ENCODE measurements at regions of chr7 and their contacts with region 1.

Region 1: DNA sequence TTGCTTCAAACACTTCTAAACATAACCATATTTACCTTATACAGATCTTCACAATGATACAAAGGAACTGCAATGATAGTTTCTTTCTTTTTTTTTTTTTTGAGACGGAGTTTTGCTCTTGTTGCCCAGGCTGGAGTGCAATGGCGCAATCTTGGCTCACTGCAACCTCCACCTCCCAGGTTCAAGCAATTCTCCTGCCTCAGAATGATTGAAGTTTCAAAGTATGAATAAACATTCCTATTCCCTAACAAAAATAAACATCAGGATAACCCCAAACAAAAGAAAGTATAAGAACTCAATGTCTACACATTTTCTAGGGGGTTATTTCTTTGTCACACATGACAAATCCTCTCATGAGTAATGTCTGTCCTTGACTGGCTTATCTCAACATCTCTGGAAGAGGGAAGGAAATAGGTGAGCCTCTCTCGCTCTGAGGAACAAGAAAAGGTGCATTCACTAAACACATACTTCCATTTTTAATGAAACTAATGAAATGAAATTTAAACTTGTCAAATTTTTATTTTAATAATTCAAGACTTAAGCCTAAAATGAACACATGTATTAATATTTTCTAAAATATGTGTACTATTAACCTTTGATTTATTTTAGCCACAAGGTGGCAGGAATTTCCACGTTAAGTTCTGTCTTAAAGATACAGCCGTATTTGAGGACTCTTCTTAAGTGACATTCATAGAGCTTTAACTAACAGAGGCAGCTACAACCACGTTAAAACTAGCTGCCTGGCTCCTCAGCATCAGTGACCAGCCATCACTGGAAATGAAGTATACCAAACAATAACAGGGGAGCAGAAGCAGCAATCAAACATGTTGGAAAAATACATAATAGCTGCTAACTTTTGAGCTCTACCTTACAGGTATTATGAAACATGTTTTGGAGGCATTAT is 58.3 kb downstream of the MALSU1 start:
- DNase-seq: no peak
- ATAC-seq: peak; percentile 68
- H3K4me3 ChIP-seq: no peak overlapping the region
- H3K27ac ChIP-seq: no peak overlapping the region; the same call in 1 of the 2 replicates
- H3K4me1 ChIP-seq: peaks cover 30% of the 10 kb centered on the region
- H3K27me3 ChIP-seq: no peaks in the 10 kb centered on the region
- CTCF ChIP-seq: peak; percentile 23 to 62 (median 36); a peak in 2 of 6 replicates
- EP300 ChIP-seq: no peak
- POLR2A ChIP-seq: no peak
- RAD21 ChIP-seq: peak; percentile 72

Region 2: DNA sequence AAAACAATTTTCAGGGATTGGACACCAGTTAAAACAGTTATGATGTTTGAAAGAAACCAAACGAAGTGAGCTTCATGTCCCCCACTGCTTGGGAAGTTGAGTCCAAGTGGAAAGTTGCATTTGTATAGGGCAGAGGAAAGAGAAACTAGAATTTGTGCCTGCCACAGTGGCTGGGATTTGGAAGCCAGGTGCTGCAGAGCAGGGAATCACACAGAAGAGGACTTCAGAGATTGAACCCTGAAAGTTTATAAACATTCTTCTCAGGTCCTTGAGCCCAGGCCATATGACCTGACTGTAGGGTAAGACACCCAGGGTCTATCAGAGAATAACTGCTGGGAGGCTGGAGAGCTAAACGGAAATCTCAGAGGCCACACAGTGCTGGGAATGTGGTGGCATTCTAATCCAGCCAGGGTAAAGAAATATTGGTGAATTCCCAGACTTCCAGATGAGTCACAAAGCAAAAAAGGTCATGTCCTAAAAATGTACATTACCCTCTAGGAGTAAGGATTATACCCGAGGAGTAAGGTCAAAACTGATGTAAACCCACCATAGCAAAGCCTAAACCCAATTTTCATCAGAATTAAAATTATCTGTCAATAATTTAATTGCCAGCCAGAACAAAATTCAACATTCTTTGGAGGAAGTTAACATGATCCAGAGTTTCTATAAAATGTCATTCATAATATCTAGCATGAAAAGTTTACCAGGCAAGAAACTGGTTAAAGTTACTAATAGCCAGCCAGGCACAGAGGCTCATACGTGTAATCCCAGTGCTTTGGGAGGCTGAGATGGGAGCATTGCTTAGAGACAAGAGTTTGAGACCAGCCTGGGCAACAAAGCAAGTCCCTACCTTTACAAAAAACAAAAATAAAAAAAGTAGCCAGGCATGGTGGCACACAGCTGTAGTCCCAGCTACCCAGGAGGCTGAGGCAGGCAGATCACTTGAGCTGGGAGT is 566.0 kb before region 1 on chr7:
- CTCF ChIA-PET with region 1: no interaction called
- POLR2A ChIA-PET with region 1: no interaction called
- RAD21 ChIA-PET with region 1: no interaction called
- SMC1A ChIA-PET with region 1: no interaction called
- in situ Hi-C with region 1: no loop called
- intact Hi-C with region 1: no loop called
- DNase-seq: no peak
- ATAC-seq: no peak
- H3K4me3 ChIP-seq: no peak overlapping the region
- H3K27ac ChIP-seq: no peak overlapping the region
- H3K4me1 ChIP-seq: no peaks in the 10 kb centered on the region
- H3K27me3 ChIP-seq: no peaks in the 10 kb centered on the region
- CTCF ChIP-seq: no peak
- EP300 ChIP-seq: no peak
- POLR2A ChIP-seq: no peak
- RAD21 ChIP-seq: no peak

Region 3: DNA sequence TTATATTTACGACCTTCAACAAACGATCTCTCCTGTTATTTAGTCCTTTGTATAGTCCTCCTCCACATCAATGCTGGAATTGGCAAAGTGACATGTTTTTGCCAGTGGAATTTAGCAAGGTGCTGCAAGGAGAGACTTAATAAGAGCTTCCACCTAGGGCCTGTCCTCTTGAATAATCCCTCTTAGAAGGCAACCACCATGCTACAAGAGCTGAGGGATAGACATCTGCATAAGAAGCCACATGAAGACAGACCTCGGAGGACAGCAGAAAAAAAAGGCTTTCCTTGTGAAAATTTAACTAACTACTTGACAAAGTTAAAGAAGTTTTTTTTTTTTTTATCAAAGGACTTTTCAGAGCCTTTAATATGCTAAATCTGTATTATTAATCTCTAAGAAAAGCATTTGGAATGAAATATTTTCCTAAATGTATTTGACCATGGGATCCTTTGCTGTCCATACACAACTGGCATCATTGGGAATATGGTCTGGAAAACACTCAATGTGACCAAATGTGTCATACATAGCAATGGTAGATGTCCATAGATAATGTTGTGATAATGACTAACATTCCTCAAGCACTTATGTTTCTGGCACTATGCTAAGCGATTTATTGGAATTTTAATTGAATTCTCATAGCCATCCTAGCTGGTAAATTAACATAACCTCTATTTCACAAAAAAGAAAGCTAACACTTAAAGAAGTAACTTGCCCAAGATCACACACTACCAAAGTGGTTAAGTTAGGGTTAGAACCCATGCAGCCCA is 356.7 kb before region 1 on chr7:
- CTCF ChIA-PET with region 1: no interaction called
- POLR2A ChIA-PET with region 1: no interaction called
- RAD21 ChIA-PET with region 1: no interaction called
- SMC1A ChIA-PET with region 1: no interaction called
- in situ Hi-C with region 1: no loop called
- intact Hi-C with region 1: no loop called
- DNase-seq: no peak
- ATAC-seq: no peak
- H3K4me3 ChIP-seq: no peak overlapping the region
- H3K27ac ChIP-seq: peak overlapping the region; percentile 83
- H3K4me1 ChIP-seq: peaks cover 39% of the 10 kb centered on the region
- H3K27me3 ChIP-seq: no peaks in the 10 kb centered on the region
- CTCF ChIP-seq: no peak
- EP300 ChIP-seq: no peak
- POLR2A ChIP-seq: no peak
- RAD21 ChIP-seq: no peak

Region 4: DNA sequence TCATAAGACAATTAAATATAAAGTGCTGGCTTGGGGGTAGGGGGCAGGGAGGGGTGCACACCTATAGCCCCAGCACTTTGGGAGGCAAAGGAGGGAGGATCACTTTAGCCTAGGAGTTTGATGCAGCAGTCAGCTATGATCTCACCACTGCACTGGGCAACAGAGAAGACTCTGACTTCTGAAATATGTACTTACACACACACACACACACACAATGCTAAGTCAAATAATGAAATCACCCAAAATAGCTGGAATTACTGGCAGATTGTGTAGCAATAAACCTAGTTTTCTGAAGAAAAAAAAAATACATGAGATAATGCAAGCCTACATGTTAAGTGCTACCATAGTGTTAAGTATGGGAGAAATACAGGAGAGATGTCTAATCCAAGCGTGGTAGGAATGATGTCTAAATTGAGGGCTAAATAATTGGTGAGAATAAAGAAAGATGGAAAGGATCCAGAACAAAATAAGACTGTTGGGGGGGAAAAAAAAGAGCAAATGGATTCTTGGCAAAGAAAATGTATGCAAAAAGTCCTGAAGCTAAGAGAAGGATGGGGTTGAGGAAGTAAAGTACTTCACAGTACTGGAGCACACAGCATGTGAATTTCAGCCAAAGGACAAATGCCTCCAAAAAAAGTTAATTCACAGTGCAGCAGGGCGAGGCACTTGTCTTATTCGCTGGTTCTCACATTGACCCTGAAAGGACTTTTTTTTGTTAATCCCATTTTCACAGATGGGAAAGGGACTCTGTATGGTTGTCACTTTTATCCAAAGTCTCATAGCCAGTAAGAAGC is 39.0 kb after region 1 on chr7:
- CTCF ChIA-PET with region 1: interaction called, 6 read pairs
- POLR2A ChIA-PET with region 1: no interaction called
- RAD21 ChIA-PET with region 1: interaction called, 5 read pairs
- SMC1A ChIA-PET with region 1: interaction called, 12 read pairs
- in situ Hi-C with region 1: no loop called
- intact Hi-C with region 1: no loop called
- DNase-seq: no peak
- ATAC-seq: no peak
- H3K4me3 ChIP-seq: no peak overlapping the region
- H3K27ac ChIP-seq: no peak overlapping the region
- H3K4me1 ChIP-seq: peaks cover 7% of the 10 kb centered on the region
- H3K27me3 ChIP-seq: no peaks in the 10 kb centered on the region
- CTCF ChIP-seq: no peak
- EP300 ChIP-seq: no peak
- POLR2A ChIP-seq: no peak
- RAD21 ChIP-seq: no peak

Region 5: GRCh38 chr7:23418046-23418445 is 60.6 kb after region 1 on chr7:
- CTCF ChIA-PET with region 1: interaction called, 30 read pairs
- POLR2A ChIA-PET with region 1: interaction called, 4 read pairs
- RAD21 ChIA-PET with region 1: interaction called, 9 read pairs
- SMC1A ChIA-PET with region 1: interaction called, 14 read pairs
- in situ Hi-C with region 1: no loop called
- intact Hi-C with region 1: no loop called
- DNase-seq: no peak
- ATAC-seq: peak; percentile 64
- H3K4me3 ChIP-seq: no peak overlapping the region
- H3K27ac ChIP-seq: no peak overlapping the region
- H3K4me1 ChIP-seq: peaks cover 18% of the 10 kb centered on the region
- H3K27me3 ChIP-seq: no peaks in the 10 kb centered on the region
- CTCF ChIP-seq: no peak
- EP300 ChIP-seq: no peak
- POLR2A ChIP-seq: no peak
- RAD21 ChIP-seq: no peak

Region 6: DNA sequence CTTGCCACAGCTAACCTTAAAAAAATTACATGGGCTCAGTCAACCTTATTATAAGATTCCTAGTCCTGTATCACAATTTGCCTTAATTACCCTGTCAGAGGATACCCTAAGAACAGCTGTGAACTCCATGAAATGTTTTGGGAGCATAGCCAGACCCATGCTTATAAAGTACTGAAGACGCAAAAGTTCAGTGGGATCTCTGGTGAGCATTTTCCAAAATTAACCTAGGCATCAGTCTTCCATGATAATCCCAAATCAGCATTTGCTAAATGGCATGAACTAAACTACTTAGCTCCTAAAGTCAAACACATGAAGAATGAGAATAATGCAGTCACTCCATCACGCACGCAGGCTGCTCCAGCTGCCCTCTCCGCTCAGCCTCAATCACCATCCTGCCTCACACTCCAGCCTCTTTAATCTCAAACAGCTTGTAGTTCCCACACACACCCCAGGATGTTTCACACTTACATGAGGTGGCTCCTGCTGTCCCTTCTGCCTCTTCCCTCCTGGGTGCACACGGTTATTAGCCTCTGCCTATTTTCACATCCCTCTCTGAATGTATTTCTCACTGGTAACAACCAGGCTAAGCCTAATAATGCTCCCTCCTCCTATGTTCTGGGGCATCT is 97.6 kb after region 1 on chr7:
- CTCF ChIA-PET with region 1: interaction called, 10 read pairs
- POLR2A ChIA-PET with region 1: no interaction called
- RAD21 ChIA-PET with region 1: interaction called, 6 read pairs
- SMC1A ChIA-PET with region 1: interaction called, 8 read pairs
- in situ Hi-C with region 1: no loop called
- intact Hi-C with region 1: no loop called
- DNase-seq: no peak
- ATAC-seq: peak; percentile 13; the same call in 2 of the 3 replicates
- H3K4me3 ChIP-seq: no peak overlapping the region
- H3K27ac ChIP-seq: no peak overlapping the region
- H3K4me1 ChIP-seq: peaks cover 14% of the 10 kb centered on the region
- H3K27me3 ChIP-seq: no peaks in the 10 kb centered on the region
- CTCF ChIP-seq: no peak
- EP300 ChIP-seq: no peak
- POLR2A ChIP-seq: no peak
- RAD21 ChIP-seq: no peak

Region 7: DNA sequence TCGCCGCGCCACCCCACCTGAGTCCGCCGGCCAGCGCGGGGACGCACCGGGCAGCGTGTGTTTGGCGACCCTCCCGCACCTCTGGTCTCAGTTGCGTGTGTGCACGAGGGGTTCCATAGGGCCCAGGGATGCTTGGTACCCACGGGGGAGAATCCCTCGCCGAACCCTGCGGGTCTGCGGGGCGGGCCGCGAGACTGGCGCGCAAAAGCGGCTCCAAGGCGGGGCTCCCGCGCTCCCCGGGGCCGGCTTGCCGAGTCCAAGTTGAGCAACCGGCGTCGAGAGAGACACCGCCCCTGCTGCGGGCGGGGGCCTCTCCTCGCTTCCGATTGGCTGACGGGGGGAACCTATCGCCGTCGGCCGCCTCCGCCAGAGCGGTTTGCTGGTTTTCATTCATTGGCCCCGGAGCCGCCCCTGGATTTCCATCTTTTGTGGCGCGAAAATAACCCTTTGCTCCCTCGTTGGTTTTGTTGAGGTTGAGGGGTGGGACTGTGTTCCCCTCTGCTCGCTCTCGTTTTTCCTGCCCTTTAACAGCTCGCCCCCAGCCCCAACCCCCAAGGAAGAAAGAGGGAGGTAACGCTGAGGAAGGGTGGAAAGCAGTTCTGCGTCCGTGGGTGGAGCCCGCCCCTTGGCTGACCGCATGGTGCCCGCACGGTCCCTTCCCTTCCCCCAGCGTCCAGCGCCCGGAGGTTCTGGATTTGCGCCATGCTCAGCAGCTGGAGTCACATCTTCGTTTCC is 116.8 kb after region 1 on chr7:
- CTCF ChIA-PET with region 1: interaction called, 10 read pairs
- POLR2A ChIA-PET with region 1: interaction called, 5 read pairs
- RAD21 ChIA-PET with region 1: interaction called, 19 read pairs
- SMC1A ChIA-PET with region 1: interaction called, 11 read pairs
- in situ Hi-C with region 1: no loop called
- intact Hi-C with region 1: loop called (anchors 5 kb)
- DNase-seq: peak; percentile 76
- ATAC-seq: peak; percentile 76
- H3K4me3 ChIP-seq: peak overlapping the region; percentile 89
- H3K27ac ChIP-seq: peak overlapping the region; percentile 94
- H3K4me1 ChIP-seq: no peaks in the 10 kb centered on the region
- H3K27me3 ChIP-seq: peaks cover 0 to 4% of the 10 kb centered on the region in 2 experiments; a peak in 1 of 4 replicates
- CTCF ChIP-seq: no peak
- EP300 ChIP-seq: no peak
- POLR2A ChIP-seq: peak; percentile 93
- RAD21 ChIP-seq: no peak

Region 8: GRCh38 chr7:23546897-23547572 is 189.6 kb after region 1 on chr7:
- CTCF ChIA-PET with region 1: interaction called, 71 read pairs
- POLR2A ChIA-PET with region 1: interaction called, 3 read pairs
- RAD21 ChIA-PET with region 1: interaction called, 46 read pairs
- SMC1A ChIA-PET with region 1: interaction called, 50 read pairs
- in situ Hi-C with region 1: no loop called
- intact Hi-C with region 1: loop called (anchors 2 kb)
- DNase-seq: peak; percentile 74
- ATAC-seq: peak; percentile 79
- H3K4me3 ChIP-seq: no peak overlapping the region
- H3K27ac ChIP-seq: peak overlapping the region; percentile 18; the same call in 1 of the 2 replicates
- H3K4me1 ChIP-seq: peaks cover 13% of the 10 kb centered on the region
- H3K27me3 ChIP-seq: no peaks in the 10 kb centered on the region
- CTCF ChIP-seq: peak; percentile 83 to 95 (median 93); a peak in 5 of 6 replicates
- EP300 ChIP-seq: no peak
- POLR2A ChIP-seq: no peak
- RAD21 ChIP-seq: peak; percentile 89

Region 9: GRCh38 chr7:23654508-23654907 is 297.1 kb after region 1 on chr7:
- CTCF ChIA-PET with region 1: no interaction called
- POLR2A ChIA-PET with region 1: no interaction called
- RAD21 ChIA-PET with region 1: no interaction called
- SMC1A ChIA-PET with region 1: no interaction called
- in situ Hi-C with region 1: no loop called
- intact Hi-C with region 1: no loop called
- DNase-seq: no peak
- ATAC-seq: no peak
- H3K4me3 ChIP-seq: no peak overlapping the region
- H3K27ac ChIP-seq: no peak overlapping the region
- H3K4me1 ChIP-seq: no peaks in the 10 kb centered on the region
- H3K27me3 ChIP-seq: no peaks in the 10 kb centered on the region
- CTCF ChIP-seq: 0 out of 6 replicates have a peak, but pooled peaks of 2 of the 3 experiments have one; percentile 16 to 31
- EP300 ChIP-seq: no peak
- POLR2A ChIP-seq: no peak
- RAD21 ChIP-seq: peak; percentile 15; the same call in 1 of the 2 replicates